Activated T-helper 2 cell treated with anti-CD3 and anti-CD28 coated beads, Interferon-gamma antibody, Interleukin-2, Interleukin-4, amounts not matched to agents 10 μg/mL and 5 μg/mL and 100 μg/mL, durations not matched to agents 14 hours and 24 hours and 36 hours (primary cell): ENCODE measurements at regions of chr18 and their contacts with region 1.

Region 1: GRCh38 chr18:23377669-23378301 is 75.3 kb upstream of the RIOK3 start:
- DNase-seq: no peak
- H3K4me3 Mint-ChIP-seq: no peak overlapping the region
- H3K27ac Mint-ChIP-seq: peak overlapping the region; percentile 82
- H3K4me1 Mint-ChIP-seq: peaks cover 24% of the 10 kb centered on the region
- H3K27me3 Mint-ChIP-seq: no peaks in the 10 kb centered on the region

Region 2: DNA sequence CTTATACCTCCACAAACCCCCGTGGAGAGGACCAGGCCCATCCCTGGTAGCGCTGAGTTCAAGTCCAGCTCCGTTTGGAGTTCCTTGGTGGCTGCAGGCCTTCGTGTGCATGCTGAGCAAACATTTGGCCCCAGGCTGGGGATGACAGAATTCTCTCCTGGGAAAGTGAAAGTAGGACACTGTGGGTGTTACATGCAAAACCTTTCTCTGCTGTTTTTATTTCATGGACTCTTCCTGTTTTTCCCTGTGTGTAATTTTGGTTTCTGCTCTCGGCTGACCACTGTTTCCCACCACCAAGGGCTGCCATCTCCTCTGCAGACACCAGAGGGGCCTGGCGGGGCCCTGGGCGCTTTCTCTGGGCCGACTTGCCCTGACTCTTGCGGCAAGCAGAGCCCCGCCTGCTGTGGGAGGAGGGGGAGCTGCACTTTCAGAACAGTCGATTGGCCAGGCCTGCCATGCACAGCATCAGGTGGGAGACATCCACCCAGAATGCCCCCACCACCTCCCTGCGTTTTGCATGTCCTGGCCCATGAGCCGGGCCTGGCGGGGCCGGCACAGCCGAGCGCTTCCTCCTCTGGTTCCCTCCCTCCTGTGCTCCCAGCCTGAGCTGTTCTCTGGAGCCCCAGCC is 140.1 kb before region 1 on chr18:
- intact Hi-C with region 1: loop called (anchors 2 kb)
- DNase-seq: peak; percentile 33
- H3K4me3 Mint-ChIP-seq: peak overlapping the region; percentile 62
- H3K27ac Mint-ChIP-seq: peak overlapping the region; percentile 78
- H3K4me1 Mint-ChIP-seq: peaks cover 58% of the 10 kb centered on the region
- H3K27me3 Mint-ChIP-seq: no peaks in the 10 kb centered on the region

Region 3: GRCh38 chr18:23307567-23308295 is 70.1 kb before region 1 on chr18:
- intact Hi-C with region 1: loop called (anchors 5 kb)
- DNase-seq: peak; percentile 36
- H3K4me3 Mint-ChIP-seq: no peak overlapping the region
- H3K27ac Mint-ChIP-seq: peak overlapping the region; percentile 78
- H3K4me1 Mint-ChIP-seq: peaks cover 43% of the 10 kb centered on the region
- H3K27me3 Mint-ChIP-seq: no peaks in the 10 kb centered on the region

Region 4: DNA sequence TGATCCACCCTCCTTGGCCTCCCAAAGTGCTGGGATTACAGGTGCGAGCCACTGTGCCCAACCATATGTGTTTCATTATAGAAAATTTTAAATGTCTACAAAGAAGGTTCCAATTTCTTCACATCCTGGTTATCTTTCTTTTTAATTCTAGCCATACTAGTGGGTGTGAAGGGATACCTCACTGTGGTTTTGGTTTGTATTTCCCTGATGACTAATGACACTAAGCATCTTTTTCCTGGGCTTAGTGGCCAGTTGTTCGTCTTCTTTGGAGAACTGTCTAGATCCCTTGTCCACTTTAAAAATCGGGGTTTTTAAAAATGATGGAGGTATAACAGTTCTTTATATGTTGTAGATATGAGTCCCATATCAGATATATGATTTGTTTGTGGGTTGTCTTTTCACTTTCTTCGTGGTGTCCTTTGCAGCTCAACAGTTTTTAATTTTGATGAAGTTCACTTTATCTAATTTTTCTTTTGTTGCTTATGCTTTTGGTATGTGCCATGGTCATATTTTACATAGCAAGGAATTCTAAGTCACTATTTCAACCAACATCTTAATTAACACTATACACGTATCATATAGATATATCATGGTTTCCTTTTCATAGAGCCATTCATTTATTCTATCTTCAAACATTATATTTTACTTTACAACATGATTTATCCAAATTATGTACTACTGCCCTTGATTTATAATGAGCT is 59.7 kb before region 1 on chr18:
- intact Hi-C with region 1: no loop called
- DNase-seq: no peak
- H3K4me3 Mint-ChIP-seq: no peak overlapping the region
- H3K27ac Mint-ChIP-seq: no peak overlapping the region
- H3K4me1 Mint-ChIP-seq: peaks cover 45% of the 10 kb centered on the region
- H3K27me3 Mint-ChIP-seq: no peaks in the 10 kb centered on the region